ENCODE measurements at regions of chr1 and their contacts with region 1.

Region 1: DNA sequence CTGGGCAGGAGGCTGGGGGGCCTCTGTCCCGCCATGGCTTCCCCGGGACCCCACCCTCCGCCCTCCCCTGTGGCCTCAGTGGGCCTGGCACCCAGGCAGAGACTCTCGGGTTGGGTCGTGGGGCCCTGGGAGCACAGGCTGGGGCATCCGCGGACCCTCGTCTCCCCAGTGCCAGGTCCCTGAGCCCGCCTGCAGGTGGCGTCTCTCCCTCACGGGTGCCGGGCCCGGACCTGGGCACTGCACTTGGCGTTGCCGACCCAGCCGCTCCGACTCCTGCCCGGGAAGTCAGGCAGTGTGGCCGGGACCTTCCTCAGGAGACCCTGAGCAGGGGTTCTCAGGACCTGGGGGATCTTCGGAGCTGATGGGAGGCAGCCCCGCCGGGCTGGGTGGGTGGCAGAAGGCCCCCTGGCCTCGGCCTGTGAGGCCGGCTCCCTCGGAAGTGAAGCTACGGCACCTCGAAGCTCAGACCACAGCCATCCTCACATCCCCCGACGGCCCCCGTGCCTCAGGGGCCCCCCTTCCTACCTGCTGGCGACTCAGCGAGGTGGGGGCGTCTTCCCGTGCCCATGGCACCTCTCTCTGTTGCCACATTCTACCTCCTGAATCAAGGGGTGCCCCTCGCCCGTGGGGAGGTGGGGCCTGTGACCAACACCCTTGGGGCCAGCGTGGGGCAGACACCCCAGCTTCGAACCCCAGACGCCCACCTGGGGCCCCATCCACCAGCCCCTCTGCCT is 6.4 kb upstream of the C1orf159 start:
- DNase-seq: peak; percentile 89 to 94
- ATAC-seq: peak; percentile 87
- H3K4me3 ChIP-seq: no peak overlapping the region
- H3K27ac ChIP-seq: no peak overlapping the region
- H3K4me1 ChIP-seq: no peaks in the 10 kb centered on the region
- H3K27me3 ChIP-seq: no peaks in the 10 kb centered on the region

Region 2: GRCh38 chr1:1291548-1292441 is 169.6 kb after region 1 on chr1:
- intact Hi-C with region 1: loop called (anchors 2 to 5 kb)
- DNase-seq: no peak
- ATAC-seq: peak; percentile 65
- H3K4me3 ChIP-seq: no peak overlapping the region
- H3K27ac ChIP-seq: no peak overlapping the region
- H3K4me1 ChIP-seq: no peaks in the 10 kb centered on the region
- H3K27me3 ChIP-seq: no peaks in the 10 kb centered on the region

Region 3: DNA sequence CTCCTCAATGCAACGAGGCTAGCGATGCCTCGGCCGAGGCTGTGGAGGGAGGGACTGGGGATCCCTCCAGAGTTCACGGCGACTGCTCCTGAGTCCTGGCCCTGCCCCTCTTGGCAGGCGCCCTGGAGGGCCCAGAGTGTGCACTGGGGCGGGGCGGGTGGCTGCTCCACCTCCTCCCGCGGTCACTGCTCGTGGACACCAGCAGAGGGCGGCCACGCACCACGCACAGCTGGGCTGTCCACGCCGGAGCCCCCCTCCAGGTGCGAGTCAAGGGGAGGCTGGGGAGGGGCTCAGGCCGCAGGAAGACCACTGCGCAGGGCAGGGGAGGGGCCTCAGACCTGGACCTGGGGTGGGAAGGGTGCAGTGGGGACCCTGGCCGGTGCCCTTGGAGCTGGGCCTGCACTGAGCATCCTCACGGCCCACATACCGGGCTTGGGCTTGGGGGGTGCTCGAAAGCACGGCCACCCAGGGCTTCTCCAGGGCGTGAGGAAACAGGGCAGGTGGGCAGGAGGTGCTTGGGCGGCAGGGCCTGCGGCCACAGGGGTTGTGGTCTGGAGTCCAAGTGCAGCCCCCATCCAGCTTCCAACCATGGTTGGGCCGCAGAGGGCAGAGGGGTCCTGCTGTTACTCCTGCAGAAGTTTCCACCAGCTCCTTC is 1699.8 kb after region 1 on chr1:
- intact Hi-C with region 1: no loop called
- DNase-seq: peak; percentile 78 to 87
- ATAC-seq: peak; percentile 82
- H3K4me3 ChIP-seq: no peak overlapping the region
- H3K27ac ChIP-seq: no peak overlapping the region
- H3K4me1 ChIP-seq: no peaks in the 10 kb centered on the region
- H3K27me3 ChIP-seq: no peaks in the 10 kb centered on the region